Mammary epithelial cell (primary cell): ENCODE measurements at regions of chr5 and their contacts with region 1.

Region 1: GRCh38 chr5:58886315-58887207 is 303.7 kb downstream of the RAB3C start:
- DNase-seq: peak; percentile 62
- H3K4me3 ChIP-seq: no peak overlapping the region
- H3K27ac ChIP-seq: no peak overlapping the region
- H3K4me1 ChIP-seq: peaks cover 5% of the 10 kb centered on the region
- H3K27me3 ChIP-seq: peaks cover 2% of the 10 kb centered on the region
- CTCF ChIP-seq: peak; percentile 85 to 97

Region 2: GRCh38 chr5:58524571-58524970 is 362.0 kb before region 1 on chr5:
- CTCF ChIA-PET with region 1: interaction called, 10 read pairs
- dilution Hi-C with region 1: no loop called
- in situ Hi-C with region 1: no loop called
- intact Hi-C with region 1: no loop called
- DNase-seq: no peak
- H3K4me3 ChIP-seq: no peak overlapping the region
- H3K27ac ChIP-seq: no peak overlapping the region
- H3K4me1 ChIP-seq: no peaks in the 10 kb centered on the region
- H3K27me3 ChIP-seq: peaks cover 9% of the 10 kb centered on the region
- CTCF ChIP-seq: no peak

Region 3: GRCh38 chr5:58999804-59000595 is 113.4 kb after region 1 on chr5:
- CTCF ChIA-PET with region 1: no interaction called
- dilution Hi-C with region 1: no loop called
- in situ Hi-C with region 1: loop called in 1 of 2 experiments (anchors 5 kb)
- intact Hi-C with region 1: no loop called
- DNase-seq: no peak
- H3K4me3 ChIP-seq: no peak overlapping the region
- H3K27ac ChIP-seq: no peak overlapping the region
- H3K4me1 ChIP-seq: no peaks in the 10 kb centered on the region
- H3K27me3 ChIP-seq: no peaks in the 10 kb centered on the region
- CTCF ChIP-seq: no peak

Region 4: DNA sequence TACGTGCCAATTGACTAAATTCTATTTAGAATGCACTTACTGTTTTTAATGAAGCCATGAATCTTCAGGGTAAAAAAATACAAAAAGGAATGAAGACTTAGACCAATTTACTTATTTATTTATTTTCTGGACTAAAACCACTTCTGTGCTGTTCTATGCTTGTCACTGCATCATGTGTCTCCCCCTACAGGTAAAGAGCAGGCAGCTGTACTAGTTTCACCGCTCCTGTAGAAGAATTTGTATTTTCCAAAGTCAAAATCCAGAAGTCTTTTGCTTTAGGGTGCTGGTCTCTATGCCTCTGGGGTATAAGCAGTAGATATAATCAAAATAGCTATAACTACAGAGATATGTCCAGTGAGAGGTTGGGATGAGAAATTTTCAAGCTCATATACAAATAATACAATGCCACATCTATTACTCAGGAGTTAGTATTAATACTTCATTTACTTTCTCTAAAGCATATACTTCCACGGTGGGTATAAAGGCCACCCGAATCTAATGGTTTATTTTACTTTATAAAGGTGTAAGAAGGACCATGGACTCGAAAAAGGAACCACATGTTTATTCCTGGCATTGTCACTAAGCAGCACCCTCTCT is 287.8 kb after region 1 on chr5:
- CTCF ChIA-PET with region 1: no interaction called
- dilution Hi-C with region 1: no loop called
- in situ Hi-C with region 1: loop called (anchors 5 to 25 kb)
- intact Hi-C with region 1: loop called (anchors 1 kb)
- DNase-seq: peak; percentile 35
- H3K4me3 ChIP-seq: no peak overlapping the region
- H3K27ac ChIP-seq: no peak overlapping the region
- H3K4me1 ChIP-seq: no peaks in the 10 kb centered on the region
- H3K27me3 ChIP-seq: no peaks in the 10 kb centered on the region
- CTCF ChIP-seq: peak; percentile 91 to 93

Region 5: GRCh38 chr5:59367791-59368394 is 481.3 kb after region 1 on chr5:
- CTCF ChIA-PET with region 1: no interaction called
- dilution Hi-C with region 1: no loop called
- in situ Hi-C with region 1: loop called in 1 of 2 experiments (anchors 25 kb)
- intact Hi-C with region 1: loop called (anchors 10 kb)
- DNase-seq: peak; percentile 44
- H3K4me3 ChIP-seq: no peak overlapping the region
- H3K27ac ChIP-seq: no peak overlapping the region
- H3K4me1 ChIP-seq: no peaks in the 10 kb centered on the region
- H3K27me3 ChIP-seq: no peaks in the 10 kb centered on the region
- CTCF ChIP-seq: peak; percentile 78 to 88